SK-N-SH (cell line): ENCODE measurements at regions of chr3 and their contacts with region 1.

Region 1: DNA sequence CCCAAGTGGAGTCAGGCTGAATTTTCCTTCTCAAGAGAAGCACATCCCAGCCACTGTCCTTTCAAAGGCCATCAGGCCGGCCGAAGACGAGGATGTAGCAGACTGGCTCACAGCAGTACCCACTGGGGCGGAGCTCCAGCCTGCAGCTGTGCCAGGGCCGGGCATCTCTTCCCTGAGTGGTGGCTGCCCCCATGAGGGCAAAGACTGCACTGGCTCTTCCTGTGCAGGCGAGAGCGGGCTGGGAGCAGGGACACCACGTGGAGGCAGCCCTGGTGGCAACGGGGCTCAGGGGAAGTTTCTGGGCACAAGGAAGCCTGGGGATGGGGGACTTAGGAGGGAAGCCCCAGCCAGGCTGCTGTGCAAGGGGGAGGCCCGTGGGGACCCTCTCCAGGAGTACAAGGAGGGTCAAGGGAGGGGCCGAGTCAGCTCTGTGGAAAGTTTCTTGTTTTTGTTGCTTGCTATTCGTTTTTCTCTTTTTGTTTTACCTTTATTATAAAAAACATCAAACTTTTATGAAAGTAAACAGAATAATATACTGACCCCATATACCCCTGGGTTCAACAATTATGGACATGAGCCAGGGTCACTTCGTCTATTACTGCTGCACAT is 66.1 kb downstream of the RPN1 start:
- DNase-seq: peak; percentile 94
- H3K4me3 ChIP-seq: no peak overlapping the region
- H3K27ac ChIP-seq: peak overlapping the region in 1 of 2 experiments; percentile 43; a peak in 2 of 4 replicates
- H3K4me1 ChIP-seq: peaks cover 0 to 10% of the 10 kb centered on the region in 2 experiments; a peak in 1 of 4 replicates
- H3K27me3 ChIP-seq: no peaks in the 10 kb centered on the region
- CTCF ChIP-seq: peak; percentile 82
- EP300 ChIP-seq: no peak; a peak in 1 of 4 replicates
- RAD21 ChIP-seq: peak; percentile 99

Region 2: GRCh38 chr3:128095222-128095703 is 489.3 kb before region 1 on chr3:
- CTCF ChIA-PET with region 1: interaction called, 13 read pairs
- POLR2A ChIA-PET with region 1: no interaction called
- DNase-seq: peak; percentile 86
- H3K4me3 ChIP-seq: no peak overlapping the region; a peak in 1 of 4 replicates
- H3K27ac ChIP-seq: peak overlapping the region; percentile 43 to 80; a peak in 3 of 4 replicates
- H3K4me1 ChIP-seq: peaks cover 9 to 12% of the 10 kb centered on the region in 2 experiments; a peak in 1 of 4 replicates
- H3K27me3 ChIP-seq: no peaks in the 10 kb centered on the region
- CTCF ChIP-seq: peak; percentile 94
- EP300 ChIP-seq: no peak
- RAD21 ChIP-seq: peak; percentile 95

Region 3: GRCh38 chr3:128307029-128307633 is 277.4 kb before region 1 on chr3:
- CTCF ChIA-PET with region 1: interaction called, 16 read pairs
- POLR2A ChIA-PET with region 1: no interaction called
- DNase-seq: peak; percentile 58
- H3K4me3 ChIP-seq: no peak overlapping the region
- H3K27ac ChIP-seq: peak overlapping the region in 1 of 2 experiments; percentile 67; a peak in 2 of 4 replicates
- H3K4me1 ChIP-seq: peaks cover 0 to 26% of the 10 kb centered on the region in 2 experiments; a peak in 2 of 4 replicates
- H3K27me3 ChIP-seq: no peaks in the 10 kb centered on the region
- CTCF ChIP-seq: no peak; the same call in 1 of the 2 replicates
- EP300 ChIP-seq: no peak
- RAD21 ChIP-seq: peak; percentile 89

Region 4: DNA sequence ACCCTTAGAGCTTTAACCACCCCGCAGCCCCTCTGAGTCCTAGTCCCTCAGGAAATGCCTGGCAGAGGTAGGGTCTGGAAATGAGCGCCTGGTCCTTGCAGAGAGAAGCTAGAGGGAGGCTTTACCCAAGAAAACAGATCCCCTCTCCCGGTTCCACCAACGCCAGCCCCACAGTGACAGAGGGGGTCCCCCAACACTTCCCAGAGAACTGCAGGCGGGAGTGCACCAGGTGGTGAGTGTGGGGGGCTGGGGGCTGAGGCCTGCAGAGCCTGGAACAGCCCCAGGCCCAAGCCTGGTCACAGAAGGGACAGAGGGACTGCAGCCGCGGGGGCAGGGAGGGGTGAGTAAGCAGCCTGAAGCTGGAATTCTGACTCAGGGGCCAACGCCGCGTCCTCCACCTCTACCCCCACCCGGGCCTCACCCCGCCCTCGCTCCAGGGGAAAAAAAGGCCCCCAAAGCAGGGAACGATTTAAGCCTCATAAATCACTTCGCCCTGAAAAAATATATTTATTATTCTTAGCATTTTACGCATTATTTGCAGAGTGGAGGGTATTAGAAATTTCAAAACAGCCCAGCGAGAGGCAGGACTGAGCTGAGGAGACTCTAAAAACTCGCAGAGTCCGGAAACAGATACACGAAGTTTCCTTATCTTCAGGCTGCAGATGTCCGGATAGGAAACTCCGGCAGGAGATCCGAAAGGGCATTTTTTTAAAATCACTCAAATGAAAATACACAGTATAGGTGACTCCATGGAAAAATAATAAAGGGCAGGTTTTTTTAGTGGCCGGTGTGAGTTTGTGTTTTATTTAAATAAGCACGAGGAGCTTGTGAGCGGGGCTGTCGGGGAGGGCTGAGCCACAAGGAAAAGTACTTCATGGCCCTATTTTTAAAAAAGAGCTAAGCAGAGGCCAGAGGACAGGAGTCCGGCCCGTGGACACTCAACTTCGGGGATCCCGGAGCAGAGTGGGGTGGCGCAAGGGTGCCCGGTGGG is 101.6 kb before region 1 on chr3:
- CTCF ChIA-PET with region 1: interaction called, 11 read pairs
- POLR2A ChIA-PET with region 1: interaction called, 4 read pairs
- DNase-seq: peak; percentile 63
- H3K4me3 ChIP-seq: peak overlapping the region; percentile 12 to 75
- H3K27ac ChIP-seq: peak overlapping the region; percentile 51 to 97
- H3K4me1 ChIP-seq: peaks cover 8 to 43% of the 10 kb centered on the region in 2 experiments
- H3K27me3 ChIP-seq: no peaks in the 10 kb centered on the region
- CTCF ChIP-seq: peak; percentile 38
- EP300 ChIP-seq: peak in 1 of 2 experiments; percentile 35; a peak in 1 of 4 replicates
- RAD21 ChIP-seq: no peak

Region 5: DNA sequence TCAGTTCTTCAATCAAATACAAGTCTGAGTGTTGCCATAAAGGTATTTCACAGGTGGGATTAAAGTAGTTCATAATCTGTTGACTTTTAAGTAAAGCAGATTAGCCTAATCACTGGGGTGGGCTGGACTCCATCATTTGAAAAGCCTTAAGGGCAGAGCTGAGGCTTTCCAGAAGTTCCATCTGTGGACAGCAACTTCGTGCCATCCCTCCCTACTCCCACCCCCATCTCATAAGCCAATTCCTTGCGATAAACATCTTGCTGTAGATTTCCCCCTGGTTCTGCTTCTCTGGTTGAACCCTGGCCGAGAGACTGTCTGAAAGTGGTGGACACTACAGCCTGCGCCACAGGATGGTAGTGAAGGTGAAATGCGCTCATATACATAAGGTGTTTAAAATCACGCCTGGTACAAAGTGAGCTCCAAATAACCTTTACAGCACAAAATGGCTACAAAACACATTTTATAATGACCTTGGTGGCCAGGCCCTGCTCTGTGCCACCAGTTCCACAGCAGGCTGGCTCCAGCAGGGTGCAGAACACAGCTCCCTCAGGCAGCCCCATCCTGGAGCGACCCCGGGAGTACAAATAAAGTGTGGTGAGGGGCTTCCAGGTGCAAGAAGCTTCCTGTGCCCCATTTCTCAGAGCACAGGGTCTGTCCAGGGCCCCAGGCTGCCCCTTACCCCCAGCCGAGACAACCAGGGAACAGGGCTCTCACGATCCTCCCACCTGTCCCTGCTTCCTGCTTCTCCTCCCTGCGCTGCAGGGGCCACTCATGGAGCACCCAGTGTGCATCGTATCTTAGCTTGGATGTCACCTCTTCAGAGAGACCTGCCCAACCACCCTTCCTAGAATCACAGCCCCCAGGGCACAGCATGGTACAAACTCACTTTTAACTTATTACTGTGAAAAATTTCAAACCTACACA is 65.7 kb before region 1 on chr3:
- CTCF ChIA-PET with region 1: interaction called, 10 read pairs
- POLR2A ChIA-PET with region 1: no interaction called
- DNase-seq: peak; percentile 68
- H3K4me3 ChIP-seq: no peak overlapping the region
- H3K27ac ChIP-seq: peak overlapping the region in 1 of 2 experiments; percentile 36; a peak in 1 of 4 replicates
- H3K4me1 ChIP-seq: peaks cover 0 to 14% of the 10 kb centered on the region in 2 experiments; a peak in 1 of 4 replicates
- H3K27me3 ChIP-seq: peaks cover 7% of the 10 kb centered on the region; the same call in 1 of the 2 replicates
- CTCF ChIP-seq: no peak
- EP300 ChIP-seq: peak in 1 of 2 experiments; percentile 69; a peak in 2 of 4 replicates
- RAD21 ChIP-seq: 0 out of 2 replicates have a peak, but pooled peaks have one; percentile 9

Region 6: GRCh38 chr3:128598884-128599664 is 14.6 kb after region 1 on chr3:
- CTCF ChIA-PET with region 1: interaction called, 33 read pairs
- POLR2A ChIA-PET with region 1: no interaction called
- DNase-seq: no peak
- H3K4me3 ChIP-seq: no peak overlapping the region
- H3K27ac ChIP-seq: no peak overlapping the region
- H3K4me1 ChIP-seq: peaks cover 0 to 9% of the 10 kb centered on the region in 2 experiments; a peak in 1 of 4 replicates
- H3K27me3 ChIP-seq: no peaks in the 10 kb centered on the region
- CTCF ChIP-seq: no peak
- EP300 ChIP-seq: no peak
- RAD21 ChIP-seq: no peak

Region 7: DNA sequence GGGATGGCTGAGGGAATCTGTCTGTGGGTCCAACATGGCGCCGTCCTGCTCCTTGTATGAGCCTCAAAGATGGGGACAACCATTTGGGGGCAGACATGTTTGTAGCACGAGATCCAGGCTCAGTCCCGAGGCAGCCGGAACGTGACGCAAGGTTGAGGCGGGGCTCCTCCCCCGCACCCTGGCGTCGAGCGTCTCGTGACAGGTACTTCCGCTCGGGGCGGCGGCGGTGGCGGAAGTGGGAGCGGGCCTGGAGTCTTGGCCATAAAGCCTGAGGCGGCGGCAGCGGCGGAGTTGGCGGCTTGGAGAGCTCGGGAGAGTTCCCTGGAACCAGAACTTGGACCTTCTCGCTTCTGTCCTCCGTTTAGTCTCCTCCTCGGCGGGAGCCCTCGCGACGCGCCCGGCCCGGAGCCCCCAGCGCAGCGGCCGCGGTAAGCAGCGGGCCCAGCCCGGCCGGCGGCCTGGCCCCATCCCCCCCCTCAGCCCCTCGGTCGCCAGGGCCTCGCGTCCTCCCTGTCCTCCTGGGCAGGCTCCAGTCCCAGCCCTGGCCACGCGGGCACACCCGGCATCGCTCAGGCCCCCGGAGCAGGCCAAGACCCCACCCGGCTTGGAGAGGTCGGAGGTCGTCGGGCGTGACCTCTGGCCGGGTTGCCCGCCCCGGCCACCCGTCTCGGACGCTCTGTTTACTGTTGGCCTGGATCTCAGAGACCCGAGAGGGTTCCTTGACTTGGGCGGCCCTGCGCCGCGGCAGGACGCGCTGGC is 141.6 kb after region 1 on chr3 and contains the start of gene RAB7A:
- CTCF ChIA-PET with region 1: no interaction called
- POLR2A ChIA-PET with region 1: no interaction called
- DNase-seq: peak; percentile 98
- H3K4me3 ChIP-seq: peak within 1 kb of the TSS; percentile 95 to 97
- H3K27ac ChIP-seq: peak within 1 kb of the TSS; percentile 82 to 90
- H3K4me1 ChIP-seq: peaks cover 5 to 9% of the 10 kb centered on the region in 2 experiments
- H3K27me3 ChIP-seq: no peaks in the 10 kb centered on the region
- CTCF ChIP-seq: no peak
- EP300 ChIP-seq: no peak
- RAD21 ChIP-seq: no peak
- polyA plus RNA-seq, gene RAB7A: 271 and 329 TPM in 2 replicates